ENCODE measurements at regions of chr20 and their contacts with region 1.

Region 1: DNA sequence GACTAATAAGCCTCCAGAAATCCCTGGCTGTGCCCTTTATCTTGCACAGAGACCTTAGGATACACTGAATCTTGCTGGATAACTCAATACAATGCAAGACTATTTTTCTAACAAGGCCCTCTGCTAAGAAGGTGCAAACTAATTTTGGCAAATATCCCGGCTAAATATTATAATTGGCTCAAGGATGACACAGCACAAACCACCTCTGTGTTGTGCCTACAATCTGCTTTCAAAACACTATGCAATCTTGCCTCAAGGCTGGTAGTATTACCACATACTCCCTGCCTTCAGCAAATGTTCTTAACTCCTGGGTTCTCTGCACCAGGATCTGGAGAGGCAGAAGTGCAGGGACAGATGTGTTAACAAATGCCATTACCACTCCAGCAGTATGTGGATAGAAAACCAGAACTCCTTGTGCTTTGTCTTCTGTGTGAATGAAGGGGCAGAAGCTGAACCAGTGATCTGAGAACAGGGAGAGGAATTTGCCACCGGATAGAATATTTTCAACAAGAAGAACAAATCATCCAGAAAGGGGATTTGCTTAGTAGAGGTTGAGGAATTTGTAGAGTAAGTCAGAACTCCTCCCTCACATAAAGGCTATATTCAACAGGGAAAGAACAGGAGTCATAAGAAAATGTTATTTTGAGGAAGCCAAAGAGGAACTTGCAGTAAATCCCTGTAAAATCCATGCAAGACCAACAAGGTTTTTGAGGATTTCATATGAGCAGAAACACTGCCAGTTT is 74.1 kb upstream of the SLC4A11 start:
- DNase-seq: peak; percentile 54 to 93
- H3K4me3 ChIP-seq: no peak overlapping the region
- H3K27ac ChIP-seq: peak overlapping the region; percentile 83
- H3K4me1 ChIP-seq: peaks cover 49% of the 10 kb centered on the region
- H3K27me3 ChIP-seq: no peaks in the 10 kb centered on the region
- CTCF ChIP-seq: no peak

Region 2: GRCh38 chr20:2688041-2688591 is 625.0 kb before region 1 on chr20:
- CTCF ChIA-PET with region 1: no interaction called
- POLR2A ChIA-PET with region 1: no interaction called
- intact Hi-C with region 1: loop called (anchors 10 kb)
- DNase-seq: peak in 1 of 2 experiments; percentile 43
- H3K4me3 ChIP-seq: no peak overlapping the region
- H3K27ac ChIP-seq: no peak overlapping the region
- H3K4me1 ChIP-seq: no peaks in the 10 kb centered on the region
- H3K27me3 ChIP-seq: peaks cover 57% of the 10 kb centered on the region
- CTCF ChIP-seq: peak; percentile 56

Region 3: DNA sequence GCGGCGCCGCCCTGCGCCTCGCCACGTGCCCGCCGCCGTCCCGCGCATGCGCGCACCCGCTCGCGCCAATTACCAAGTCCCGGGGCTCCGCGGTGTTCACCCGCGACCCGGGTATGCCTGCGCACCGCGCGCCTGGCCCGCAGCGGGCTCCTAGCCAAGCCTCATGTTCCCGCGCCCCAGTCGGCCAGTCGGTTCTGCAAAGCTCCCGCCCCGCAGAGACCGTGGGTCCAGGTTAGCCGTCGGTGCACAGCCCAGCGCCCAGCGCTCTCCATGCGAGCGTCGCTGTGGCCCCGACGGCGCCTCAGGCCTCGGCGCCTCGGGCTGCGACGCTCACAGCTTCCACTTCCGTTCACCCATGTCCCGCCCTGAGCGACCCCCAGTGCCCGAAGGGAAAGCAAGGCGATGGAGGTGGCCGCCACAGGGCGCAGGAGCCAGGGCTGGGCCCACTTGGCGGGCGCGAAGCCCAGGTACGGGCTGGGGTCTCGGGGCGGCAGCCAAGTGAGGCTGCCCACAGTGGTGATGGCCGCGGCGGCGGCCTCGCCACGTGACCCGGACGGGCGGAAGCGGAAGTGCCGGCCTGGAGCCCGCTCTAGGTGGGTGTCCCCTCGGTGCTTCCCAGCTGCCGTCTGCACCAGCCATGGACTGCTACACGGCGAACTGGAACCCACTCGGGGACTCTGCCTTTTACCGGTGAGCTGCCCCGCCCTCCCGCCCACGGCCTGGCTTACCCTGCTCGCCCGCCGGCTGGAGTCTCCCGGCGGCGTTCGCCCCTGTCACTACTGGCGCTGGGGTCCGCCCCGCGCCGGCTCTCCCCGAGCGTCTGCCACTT is 472.8 kb before region 1 on chr20 and contains the starts of genes PCED1A and VPS16:
- CTCF ChIA-PET with region 1: no interaction called
- POLR2A ChIA-PET with region 1: no interaction called
- intact Hi-C with region 1: loop called (anchors 5 kb)
- DNase-seq: peak; percentile 67 to 86
- H3K4me3 ChIP-seq: peak within 1 kb of the TSS; percentile 100
- H3K27ac ChIP-seq: peak within 1 kb of the TSS; percentile 51; the same call in 1 of the 2 replicates
- H3K4me1 ChIP-seq: peaks cover 14% of the 10 kb centered on the region
- H3K27me3 ChIP-seq: no peaks in the 10 kb centered on the region
- CTCF ChIP-seq: no peak
- total RNA-seq, gene PCED1A: 47.9 and 60.1 TPM in 2 replicates
- total RNA-seq, gene VPS16: 21.5 and 31.9 TPM in 2 replicates

Region 4: GRCh38 chr20:3051385-3052019 is 261.6 kb before region 1 on chr20:
- CTCF ChIA-PET with region 1: interaction called, 28 read pairs
- POLR2A ChIA-PET with region 1: interaction called, 8 read pairs
- intact Hi-C with region 1: loop called (anchors 1 kb)
- DNase-seq: no peak
- H3K4me3 ChIP-seq: no peak overlapping the region
- H3K27ac ChIP-seq: 0 out of 2 replicates have a peak overlapping the region, but pooled peaks have one; percentile 24
- H3K4me1 ChIP-seq: peaks cover 7% of the 10 kb centered on the region; the same call in 1 of the 2 replicates
- H3K27me3 ChIP-seq: no peaks in the 10 kb centered on the region
- CTCF ChIP-seq: no peak

Region 5: DNA sequence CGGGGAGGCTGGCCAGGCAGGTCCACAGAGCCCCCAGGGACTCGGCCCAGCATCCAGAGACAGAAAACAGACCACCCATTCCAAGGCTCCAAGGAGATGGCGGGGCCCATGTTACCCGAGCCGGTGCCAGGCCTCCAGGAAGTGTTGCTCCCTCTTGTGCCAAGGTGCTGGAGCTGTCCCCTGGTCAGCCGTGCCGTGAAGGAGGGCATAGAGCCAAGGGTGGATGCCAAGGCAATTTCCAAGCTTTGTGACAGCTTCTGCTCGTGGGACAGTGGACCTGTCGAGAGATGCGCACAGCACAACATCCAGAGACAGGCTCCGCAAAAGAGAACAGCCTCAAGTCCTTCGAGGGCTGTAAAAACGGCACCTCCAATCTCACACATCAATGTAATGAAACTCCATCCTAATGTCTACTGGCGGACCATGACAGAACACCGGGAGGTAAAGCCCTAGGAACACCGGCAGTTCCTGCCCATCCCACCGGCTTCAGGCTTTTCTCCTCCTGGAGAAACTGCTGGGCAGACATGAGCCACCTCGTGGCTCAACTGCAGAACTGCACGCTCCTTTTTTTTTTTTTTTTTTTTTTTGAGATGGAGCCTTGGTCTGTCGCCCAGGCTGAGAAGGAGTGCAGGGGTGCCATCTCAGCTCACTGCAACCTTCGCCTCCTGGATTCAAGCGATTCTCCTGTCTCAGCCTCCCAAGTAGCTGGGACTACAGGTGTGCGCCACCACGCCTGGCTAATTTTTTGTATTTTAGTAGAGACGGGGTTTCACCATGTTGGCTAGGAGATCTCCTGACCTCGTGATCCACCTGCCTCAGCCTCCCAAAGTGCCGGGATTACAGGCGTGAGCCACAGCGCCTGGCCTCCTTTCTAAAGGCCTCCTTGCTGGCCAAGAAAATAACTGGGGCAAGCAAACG is 197.7 kb before region 1 on chr20:
- CTCF ChIA-PET with region 1: interaction called, 16 read pairs
- POLR2A ChIA-PET with region 1: no interaction called
- intact Hi-C with region 1: loop called (anchors 2 kb)
- DNase-seq: peak; percentile 33 to 46
- H3K4me3 ChIP-seq: no peak overlapping the region
- H3K27ac ChIP-seq: no peak overlapping the region
- H3K4me1 ChIP-seq: no peaks in the 10 kb centered on the region
- H3K27me3 ChIP-seq: no peaks in the 10 kb centered on the region
- CTCF ChIP-seq: peak; percentile 81

Region 6: DNA sequence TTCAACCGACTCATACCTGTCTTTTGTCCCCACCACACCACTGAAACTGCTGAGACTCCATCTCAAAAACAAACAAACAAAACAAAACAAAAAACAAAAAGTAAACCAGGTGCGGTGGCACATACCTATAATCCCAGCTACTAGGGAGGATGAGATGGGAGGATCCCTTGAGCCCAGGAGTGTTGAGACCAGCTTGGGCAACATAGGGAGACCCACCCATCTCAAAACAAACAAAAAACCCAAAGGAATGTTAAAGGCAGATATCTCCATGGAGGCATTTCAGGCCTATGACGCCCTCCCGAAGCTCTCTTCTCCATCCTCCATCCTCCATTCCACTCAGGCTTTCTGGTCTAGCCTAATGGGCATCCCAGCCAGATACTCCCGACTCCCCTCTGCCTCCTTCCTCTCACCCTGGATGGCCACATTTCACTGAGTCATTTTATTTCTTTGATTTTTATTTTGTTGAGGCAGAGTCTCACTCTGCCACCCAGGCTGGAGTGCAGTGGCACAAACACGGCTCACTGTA is 70.9 kb before region 1 on chr20:
- CTCF ChIA-PET with region 1: interaction called, 12 read pairs
- POLR2A ChIA-PET with region 1: no interaction called
- intact Hi-C with region 1: no loop called
- DNase-seq: peak; percentile 35 to 51
- H3K4me3 ChIP-seq: no peak overlapping the region
- H3K27ac ChIP-seq: no peak overlapping the region
- H3K4me1 ChIP-seq: peaks cover 11% of the 10 kb centered on the region; the same call in 1 of the 2 replicates
- H3K27me3 ChIP-seq: no peaks in the 10 kb centered on the region
- CTCF ChIP-seq: no peak

Measured in PC-9 (cell line).